Calu3 (cell line): ENCODE measurements at regions of chr15 and their contacts with region 1.

Region 1: DNA sequence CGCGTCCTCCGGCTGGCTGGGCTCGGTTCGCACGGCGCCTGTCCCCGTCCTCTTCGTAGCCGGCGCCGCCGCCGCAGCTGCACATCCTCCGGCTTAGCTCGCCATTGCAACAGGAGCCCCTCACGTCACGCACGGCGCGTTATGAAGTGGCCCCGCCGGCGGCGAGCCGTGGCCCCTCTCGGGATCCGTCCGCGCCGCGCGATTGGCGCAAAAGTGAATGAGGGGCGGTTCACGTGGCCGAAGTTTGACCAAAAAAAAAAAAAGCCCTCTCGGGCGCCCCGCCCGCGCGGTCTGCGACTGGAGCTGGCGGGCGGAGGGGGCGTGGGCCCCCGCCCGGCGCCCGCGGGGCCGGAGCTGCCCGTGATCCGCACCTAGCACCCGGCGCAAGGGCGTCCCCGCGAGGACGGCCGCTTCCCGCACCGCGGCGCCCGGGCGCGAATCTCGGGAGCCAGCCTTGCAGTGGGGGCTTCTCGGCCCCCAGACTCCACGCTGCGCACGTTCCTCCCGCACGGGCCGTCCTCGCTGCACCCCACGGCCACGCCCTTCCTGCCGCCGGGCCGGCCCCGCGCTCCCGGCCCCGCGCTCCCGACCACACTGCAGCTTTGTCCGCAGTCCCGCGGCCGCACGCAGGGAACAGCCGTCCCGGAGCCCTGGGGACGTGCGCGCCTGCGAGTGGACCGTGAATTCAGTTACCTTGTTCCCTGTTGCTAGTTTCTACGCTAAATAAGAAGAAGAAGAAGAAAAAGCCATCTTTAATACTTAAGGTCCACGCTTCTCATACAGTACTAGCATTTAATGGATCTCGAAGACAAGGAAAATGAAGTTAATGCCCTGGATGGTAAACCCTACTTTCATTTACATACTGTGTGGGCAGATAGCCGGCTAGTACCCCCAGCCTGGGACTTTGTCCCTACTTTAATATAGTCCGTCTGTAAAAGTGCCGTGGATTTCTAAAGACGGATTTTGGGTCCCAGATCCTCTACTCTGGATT is at the start of gene CHSY1:
- DNase-seq: peak; percentile 90
- H3K4me3 Mint-ChIP-seq: peak within 1 kb of the TSS; percentile 83
- H3K27ac Mint-ChIP-seq: peak within 1 kb of the TSS; percentile 64
- H3K4me1 Mint-ChIP-seq: peaks cover 16% of the 10 kb centered on the region
- H3K27me3 Mint-ChIP-seq: peaks cover 14% of the 10 kb centered on the region
- CTCF ChIP-seq: no peak
- total RNA-seq, gene CHSY1: 24.0 and 25.0 TPM in 2 replicates

Region 2: DNA sequence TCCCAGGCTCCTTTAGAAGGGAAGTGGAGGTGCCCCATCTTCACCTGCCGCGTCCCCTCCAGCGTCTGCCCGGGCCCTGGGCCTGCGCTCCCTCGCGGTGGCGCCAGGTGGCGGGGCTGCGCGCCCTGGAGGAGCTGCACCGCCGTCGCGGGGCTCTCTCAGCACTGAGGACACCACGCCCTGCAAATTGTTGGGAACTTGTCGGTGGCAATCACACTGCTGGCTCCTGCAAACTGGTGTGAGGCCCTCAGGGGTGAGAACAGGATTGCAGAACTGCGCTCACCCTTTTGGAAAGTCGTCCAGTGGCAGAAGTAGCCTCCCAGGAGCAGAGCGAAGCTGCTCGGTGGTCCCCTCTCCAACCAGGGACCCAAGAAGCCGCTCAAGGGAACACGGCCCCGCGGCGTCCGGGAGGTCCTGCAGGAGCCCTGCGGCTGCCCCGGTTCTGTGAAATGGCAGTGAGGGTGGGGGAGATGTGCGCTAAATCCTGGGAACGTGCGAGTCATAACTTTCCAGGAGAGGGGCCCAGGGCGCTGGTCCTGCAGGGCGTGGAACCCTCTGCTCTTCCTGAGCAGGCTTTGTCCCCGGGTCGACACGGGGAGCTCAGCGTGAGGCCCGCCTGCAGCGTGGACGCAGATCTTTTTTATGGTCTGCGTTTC is 334.0 kb before region 1 on chr15:
- CTCF ChIA-PET with region 1: no interaction called
- intact Hi-C with region 1: loop called (anchors 10 kb)
- DNase-seq: peak; percentile 95
- H3K4me3 Mint-ChIP-seq: peak overlapping the region; percentile 82
- H3K27ac Mint-ChIP-seq: peak overlapping the region; percentile 82
- H3K4me1 Mint-ChIP-seq: peaks cover 41% of the 10 kb centered on the region
- H3K27me3 Mint-ChIP-seq: no peaks in the 10 kb centered on the region
- CTCF ChIP-seq: peak; percentile 96

Region 3: GRCh38 chr15:101088788-101089583 is 163.1 kb before region 1 on chr15:
- CTCF ChIA-PET with region 1: no interaction called
- intact Hi-C with region 1: loop called (anchors 2 kb)
- DNase-seq: peak; percentile 94
- H3K4me3 Mint-ChIP-seq: peak overlapping the region; percentile 36
- H3K27ac Mint-ChIP-seq: no peak overlapping the region
- H3K4me1 Mint-ChIP-seq: no peaks in the 10 kb centered on the region
- H3K27me3 Mint-ChIP-seq: peaks cover 20% of the 10 kb centered on the region
- CTCF ChIP-seq: peak; percentile 99

Region 4: GRCh38 chr15:101121511-101122090 is 130.5 kb before region 1 on chr15:
- CTCF ChIA-PET with region 1: no interaction called
- intact Hi-C with region 1: loop called (anchors 1 kb)
- DNase-seq: peak; percentile 62
- H3K4me3 Mint-ChIP-seq: no peak overlapping the region
- H3K27ac Mint-ChIP-seq: no peak overlapping the region
- H3K4me1 Mint-ChIP-seq: no peaks in the 10 kb centered on the region
- H3K27me3 Mint-ChIP-seq: no peaks in the 10 kb centered on the region
- CTCF ChIP-seq: no peak

Region 5: DNA sequence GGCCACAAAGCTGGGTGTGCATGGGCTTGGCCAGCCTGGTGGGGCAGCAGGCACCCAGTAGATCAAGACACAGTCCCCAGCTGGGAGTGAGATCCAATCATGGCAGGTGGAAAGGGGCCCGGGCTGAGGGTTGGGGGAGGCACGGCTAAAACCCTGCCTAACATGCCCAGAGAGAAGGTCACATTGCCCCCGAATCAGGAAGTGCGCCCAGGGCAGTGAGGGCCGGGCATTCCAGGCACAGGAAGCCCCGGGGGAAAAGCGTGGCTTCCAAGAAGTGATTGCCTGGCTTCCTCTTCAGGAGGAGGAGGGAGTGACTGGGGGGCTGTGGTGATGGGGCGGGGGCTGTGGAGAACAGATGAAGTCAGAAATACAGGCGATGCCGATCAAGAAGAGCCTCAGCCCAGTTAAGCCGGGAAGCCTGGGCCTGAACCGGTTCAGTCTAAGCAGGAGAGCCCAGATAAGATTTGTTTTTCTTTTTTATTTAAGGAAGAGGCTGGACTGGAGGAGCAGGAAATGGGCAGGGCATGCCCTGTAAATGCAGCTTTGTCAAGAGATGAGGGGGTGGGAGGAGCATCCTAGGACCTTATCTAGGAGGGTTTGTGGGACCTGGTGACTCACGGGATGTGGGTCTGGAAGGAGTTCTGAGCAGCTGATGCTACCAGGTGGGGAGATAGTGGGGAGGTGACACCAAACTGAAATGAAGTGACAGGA is 84.2 kb before region 1 on chr15:
- CTCF ChIA-PET with region 1: no interaction called
- intact Hi-C with region 1: loop called (anchors 5 kb)
- DNase-seq: peak; percentile 80
- H3K4me3 Mint-ChIP-seq: peak overlapping the region; percentile 56
- H3K27ac Mint-ChIP-seq: peak overlapping the region; percentile 91
- H3K4me1 Mint-ChIP-seq: peaks cover 26% of the 10 kb centered on the region
- H3K27me3 Mint-ChIP-seq: no peaks in the 10 kb centered on the region
- CTCF ChIP-seq: no peak